Activated CD8-positive, alpha-beta T cell treated with anti-CD3 and anti-CD28 coated beads, Interleukin-2, amount 10 ng/mL, durations not matched to agents 7 days and 5 days (primary cell): ENCODE measurements at regions of chr10 and their contacts with region 1.

Region 1: DNA sequence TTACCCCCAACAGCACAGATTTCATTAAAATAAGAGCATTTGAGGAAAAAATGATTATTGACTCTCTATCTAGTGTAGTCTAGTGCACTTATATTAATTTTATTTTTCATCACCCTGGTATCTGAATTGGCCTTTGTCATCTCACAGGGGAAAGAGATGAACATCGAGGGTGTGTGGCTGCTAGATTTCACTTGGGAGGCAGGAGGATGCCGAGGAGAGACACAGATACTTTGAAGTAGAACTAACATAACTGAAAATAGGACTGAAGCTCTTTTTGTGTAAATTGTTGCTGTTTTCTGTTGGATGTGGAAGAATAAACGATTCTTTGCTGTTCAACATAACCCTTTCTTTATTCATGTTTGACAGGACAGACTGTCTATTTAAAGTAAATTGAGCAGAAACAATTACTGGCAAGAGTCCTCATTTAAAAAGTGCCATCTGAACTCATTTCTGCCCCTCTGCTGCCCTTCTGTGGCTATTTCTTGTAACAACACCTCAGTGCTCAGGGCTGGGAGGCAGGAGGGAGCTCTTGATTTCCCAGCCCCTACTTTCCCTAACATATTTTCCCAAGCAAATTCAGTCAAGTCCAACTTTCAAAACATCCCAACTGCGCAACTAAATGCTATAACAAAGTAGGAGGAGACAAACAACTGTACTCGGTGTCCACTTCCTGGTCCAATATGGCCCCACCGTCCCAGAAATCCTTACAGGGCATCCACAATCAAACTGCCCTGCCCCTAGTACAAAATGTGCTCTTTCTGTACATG is 15.6 kb downstream of the LYZL1 start:
- DNase-seq: peak; percentile 47
- ATAC-seq: no peak
- H3K4me3 Mint-ChIP-seq: no peak overlapping the region
- H3K27ac Mint-ChIP-seq: no peak overlapping the region
- H3K4me1 Mint-ChIP-seq: peaks cover 2% of the 10 kb centered on the region
- H3K27me3 Mint-ChIP-seq: no peaks in the 10 kb centered on the region

Region 2: GRCh38 chr10:28628184-28628893 is 676.1 kb before region 1 on chr10:
- CTCF ChIA-PET with region 1: interaction called, 10 read pairs
- POLR2A ChIA-PET with region 1: no interaction called
- DNase-seq: peak; percentile 79
- ATAC-seq: peak; percentile 89
- H3K4me3 Mint-ChIP-seq: no peak overlapping the region
- H3K27ac Mint-ChIP-seq: no peak overlapping the region
- H3K4me1 Mint-ChIP-seq: peaks cover 2% of the 10 kb centered on the region
- H3K27me3 Mint-ChIP-seq: peaks cover 17% of the 10 kb centered on the region

Region 3: GRCh38 chr10:28663576-28664313 is 640.7 kb before region 1 on chr10:
- CTCF ChIA-PET with region 1: interaction called, 10 read pairs
- POLR2A ChIA-PET with region 1: no interaction called
- DNase-seq: peak; percentile 77
- ATAC-seq: peak; percentile 79
- H3K4me3 Mint-ChIP-seq: no peak overlapping the region
- H3K27ac Mint-ChIP-seq: no peak overlapping the region
- H3K4me1 Mint-ChIP-seq: peaks cover 5% of the 10 kb centered on the region
- H3K27me3 Mint-ChIP-seq: peaks cover 31% of the 10 kb centered on the region